Common myeloid progenitor, CD34-positive (primary cell): ENCODE measurements at regions of chr22 and their contacts with region 1.

Region 1: DNA sequence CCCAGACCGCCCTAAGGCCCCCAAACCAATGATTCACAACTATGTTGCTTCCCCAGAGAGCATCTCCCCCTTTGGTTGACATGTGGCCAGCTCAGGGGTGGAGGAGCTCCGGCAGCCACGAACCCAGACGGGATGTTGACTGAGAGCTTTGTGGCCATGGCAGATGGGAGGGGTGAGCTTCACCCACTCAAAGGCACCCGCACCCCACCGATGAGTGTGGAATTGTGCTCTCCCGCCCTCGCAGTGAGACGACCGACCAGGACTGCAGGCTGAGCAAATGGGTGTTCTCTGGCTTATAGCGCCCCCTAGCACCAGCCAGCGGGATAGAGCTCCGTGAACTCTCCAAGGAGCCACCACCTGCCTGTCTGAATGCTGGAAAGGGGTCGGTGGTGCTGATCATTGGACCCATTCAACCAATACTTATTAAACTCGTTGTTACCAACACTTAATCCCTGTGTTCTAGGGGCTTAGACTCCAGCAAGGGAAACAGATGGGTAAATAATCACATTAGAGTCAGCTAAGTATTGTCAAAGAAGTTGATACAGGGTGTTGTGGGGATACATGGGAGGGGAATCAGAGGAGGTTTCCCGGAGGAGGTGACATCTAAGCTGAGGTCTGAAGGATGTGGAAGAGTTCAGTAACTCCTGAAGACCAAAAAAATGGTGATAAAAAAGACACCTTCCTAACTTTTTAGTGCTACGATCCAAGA is 4.5 kb upstream of the TIMP3 start:
- DNase-seq: peak; percentile 72 to 83 (median 83)
- H3K4me3 ChIP-seq: peak overlapping the region in 3 of 7 experiments; percentile 13 to 52 (median 31)
- H3K27ac ChIP-seq: no peak overlapping the region
- H3K4me1 ChIP-seq: peaks cover 0 to 13% (median 11%) of the 10 kb centered on the region in 4 experiments
- H3K27me3 ChIP-seq: no peaks in the 10 kb centered on the region

Region 2: DNA sequence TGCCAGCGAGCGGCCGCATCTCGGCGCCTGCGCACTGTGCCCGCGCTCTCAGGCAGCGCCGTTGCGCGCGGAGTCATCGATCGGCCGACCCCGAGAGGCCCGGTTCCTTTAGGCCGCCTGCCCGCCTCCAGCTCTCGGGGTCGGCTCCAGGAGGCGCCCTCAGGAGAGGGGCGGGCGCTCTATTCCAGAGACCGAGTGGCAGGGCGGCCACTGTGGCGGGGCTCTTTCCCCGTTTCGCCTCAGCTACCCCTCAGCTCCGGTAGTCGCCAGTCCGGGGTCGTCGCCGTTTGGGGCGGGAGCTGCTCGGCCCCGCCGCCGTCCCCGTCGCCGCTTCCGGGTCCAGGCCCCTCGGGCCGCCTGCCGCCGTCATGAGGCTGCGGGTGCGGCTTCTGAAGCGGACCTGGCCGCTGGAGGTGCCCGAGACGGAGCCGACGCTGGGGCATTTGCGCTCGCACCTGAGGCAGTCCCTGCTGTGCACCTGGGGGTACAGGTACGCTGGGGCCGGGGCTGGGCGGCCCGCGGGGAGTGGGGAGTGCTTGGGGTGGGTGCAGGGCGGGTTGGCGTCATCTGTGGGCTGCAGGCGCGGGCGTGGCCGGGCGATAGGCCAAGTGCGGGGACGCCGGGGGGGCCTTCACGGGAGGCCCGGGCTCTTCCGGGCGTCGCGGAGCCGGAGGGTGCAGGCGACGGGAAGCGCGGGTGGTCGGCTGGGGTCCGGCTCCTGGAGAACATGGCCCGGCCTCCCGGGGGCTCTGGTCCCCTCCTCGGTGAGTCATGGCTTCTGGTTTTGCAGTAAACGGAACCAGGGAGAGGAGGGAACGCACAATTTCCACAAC is 322.2 kb before region 1 on chr22 and contains the start of gene FBXO7:
- CTCF ChIA-PET with region 1: no interaction called
- POLR2A ChIA-PET with region 1: no interaction called
- DNase-seq: peak; percentile 89 to 94 (median 92)
- H3K4me3 ChIP-seq: peak within 1 kb of the TSS; percentile 87 to 99 (median 96)
- H3K27ac ChIP-seq: peak within 1 kb of the TSS; percentile 89 to 93
- H3K4me1 ChIP-seq: peaks cover 11 to 21% (median 18%) of the 10 kb centered on the region in 4 experiments
- H3K27me3 ChIP-seq: peaks cover 0 to 3% (median 0%) of the 10 kb centered on the region in 5 experiments

Region 3: DNA sequence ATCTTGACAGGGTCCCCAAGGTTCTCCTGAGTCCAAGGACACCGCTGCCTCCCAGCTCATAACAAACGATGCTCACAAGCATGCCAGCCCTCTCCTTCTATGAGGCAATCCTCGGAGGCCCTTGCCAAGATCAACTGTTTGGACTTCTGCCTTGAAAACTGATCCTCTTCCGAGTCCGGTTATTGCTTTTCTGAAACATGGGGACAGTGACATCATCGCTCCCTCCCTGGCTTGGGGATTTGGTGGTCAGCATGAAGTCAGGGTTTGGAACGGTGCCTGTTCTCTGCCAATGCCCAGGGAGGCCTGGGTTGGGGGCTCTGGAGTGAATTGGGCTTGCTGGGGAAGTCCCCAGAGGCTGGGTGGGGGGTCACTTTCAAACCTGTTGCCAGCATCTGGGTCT is 173.1 kb before region 1 on chr22:
- CTCF ChIA-PET with region 1: interaction called, 26 read pairs
- POLR2A ChIA-PET with region 1: no interaction called
- DNase-seq: no peak
- H3K4me3 ChIP-seq: no peak overlapping the region
- H3K27ac ChIP-seq: no peak overlapping the region
- H3K4me1 ChIP-seq: peaks cover 15 to 40% (median 29%) of the 10 kb centered on the region in 4 experiments
- H3K27me3 ChIP-seq: no peaks in the 10 kb centered on the region

Region 4: GRCh38 chr22:32660292-32660691 is 136.7 kb before region 1 on chr22:
- CTCF ChIA-PET with region 1: interaction called, 220 read pairs
- POLR2A ChIA-PET with region 1: interaction called, 9 read pairs
- DNase-seq: peak; percentile 79 to 82 (median 80)
- H3K4me3 ChIP-seq: no peak overlapping the region
- H3K27ac ChIP-seq: no peak overlapping the region
- H3K4me1 ChIP-seq: peaks cover 0 to 9% (median 3%) of the 10 kb centered on the region in 4 experiments
- H3K27me3 ChIP-seq: no peaks in the 10 kb centered on the region

Region 5: GRCh38 chr22:32695451-32695891 is 101.5 kb before region 1 on chr22:
- CTCF ChIA-PET with region 1: interaction called, 10 read pairs
- POLR2A ChIA-PET with region 1: no interaction called
- DNase-seq: peak in 1 of 3 donors; percentile 15
- H3K4me3 ChIP-seq: no peak overlapping the region
- H3K27ac ChIP-seq: no peak overlapping the region
- H3K4me1 ChIP-seq: peaks cover 0 to 5% (median 4%) of the 10 kb centered on the region in 4 experiments
- H3K27me3 ChIP-seq: no peaks in the 10 kb centered on the region

Region 6: DNA sequence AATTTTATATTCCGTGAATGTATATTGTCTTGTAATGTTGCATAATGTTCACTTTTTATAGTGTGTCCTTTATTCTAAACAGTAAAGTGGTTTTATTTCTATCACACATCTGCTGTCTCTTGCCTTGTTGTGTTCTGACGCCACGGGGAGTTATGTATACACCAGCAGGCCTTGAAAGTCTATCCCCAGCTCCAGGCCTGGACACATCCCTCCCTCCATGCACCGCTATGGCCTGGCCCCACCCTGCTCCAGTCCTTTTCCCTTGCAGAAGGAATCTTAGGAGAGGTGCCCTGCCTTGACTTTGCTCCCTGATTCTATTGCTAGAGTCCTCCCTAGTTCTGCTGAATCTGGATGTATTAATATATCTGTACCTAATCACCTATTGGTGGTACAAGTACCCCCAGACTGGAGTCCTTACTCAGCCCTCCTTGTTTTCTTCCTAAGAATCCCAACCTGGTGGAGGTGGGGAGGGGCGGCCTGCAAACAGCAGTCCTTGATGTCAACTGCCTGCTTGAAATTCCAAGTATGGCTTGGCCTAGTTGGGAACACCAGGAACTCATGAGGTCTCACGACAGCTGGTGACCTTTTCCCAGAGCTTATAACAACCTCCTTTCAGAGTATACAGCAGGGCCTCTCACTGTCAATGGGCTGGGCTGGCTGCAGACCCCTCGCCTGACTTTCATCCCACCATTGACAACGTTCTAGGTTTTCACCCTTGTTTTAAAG is 66.1 kb after region 1 on chr22:
- CTCF ChIA-PET with region 1: no interaction called
- POLR2A ChIA-PET with region 1: no interaction called
- DNase-seq: no peak
- H3K4me3 ChIP-seq: no peak overlapping the region
- H3K27ac ChIP-seq: no peak overlapping the region
- H3K4me1 ChIP-seq: no peaks in the 10 kb centered on the region
- H3K27me3 ChIP-seq: no peaks in the 10 kb centered on the region

Region 7: GRCh38 chr22:32951076-32951806 is 154.2 kb after region 1 on chr22:
- CTCF ChIA-PET with region 1: no interaction called
- POLR2A ChIA-PET with region 1: no interaction called
- DNase-seq: peak in 2 of 3 donors; percentile 34 to 55
- H3K4me3 ChIP-seq: peak overlapping the region in 2 of 7 experiments; percentile 42 to 46
- H3K27ac ChIP-seq: no peak overlapping the region
- H3K4me1 ChIP-seq: peaks cover 0 to 45% (median 30%) of the 10 kb centered on the region in 4 experiments
- H3K27me3 ChIP-seq: no peaks in the 10 kb centered on the region

Region 8: GRCh38 chr22:32985899-32986765 is 189.1 kb after region 1 on chr22:
- CTCF ChIA-PET with region 1: interaction called, 40 read pairs
- POLR2A ChIA-PET with region 1: interaction called, 7 read pairs
- DNase-seq: peak; percentile 73 to 83 (median 79)
- H3K4me3 ChIP-seq: no peak overlapping the region
- H3K27ac ChIP-seq: no peak overlapping the region
- H3K4me1 ChIP-seq: peaks cover 0 to 6% (median 0%) of the 10 kb centered on the region in 4 experiments
- H3K27me3 ChIP-seq: no peaks in the 10 kb centered on the region

Region 9: GRCh38 chr22:33083212-33083611 is 286.2 kb after region 1 on chr22:
- CTCF ChIA-PET with region 1: no interaction called
- POLR2A ChIA-PET with region 1: no interaction called
- DNase-seq: no peak
- H3K4me3 ChIP-seq: no peak overlapping the region
- H3K27ac ChIP-seq: no peak overlapping the region
- H3K4me1 ChIP-seq: no peaks in the 10 kb centered on the region
- H3K27me3 ChIP-seq: no peaks in the 10 kb centered on the region